ENCODE measurements at regions of chr11 and their contacts with region 1.

Region 1: DNA sequence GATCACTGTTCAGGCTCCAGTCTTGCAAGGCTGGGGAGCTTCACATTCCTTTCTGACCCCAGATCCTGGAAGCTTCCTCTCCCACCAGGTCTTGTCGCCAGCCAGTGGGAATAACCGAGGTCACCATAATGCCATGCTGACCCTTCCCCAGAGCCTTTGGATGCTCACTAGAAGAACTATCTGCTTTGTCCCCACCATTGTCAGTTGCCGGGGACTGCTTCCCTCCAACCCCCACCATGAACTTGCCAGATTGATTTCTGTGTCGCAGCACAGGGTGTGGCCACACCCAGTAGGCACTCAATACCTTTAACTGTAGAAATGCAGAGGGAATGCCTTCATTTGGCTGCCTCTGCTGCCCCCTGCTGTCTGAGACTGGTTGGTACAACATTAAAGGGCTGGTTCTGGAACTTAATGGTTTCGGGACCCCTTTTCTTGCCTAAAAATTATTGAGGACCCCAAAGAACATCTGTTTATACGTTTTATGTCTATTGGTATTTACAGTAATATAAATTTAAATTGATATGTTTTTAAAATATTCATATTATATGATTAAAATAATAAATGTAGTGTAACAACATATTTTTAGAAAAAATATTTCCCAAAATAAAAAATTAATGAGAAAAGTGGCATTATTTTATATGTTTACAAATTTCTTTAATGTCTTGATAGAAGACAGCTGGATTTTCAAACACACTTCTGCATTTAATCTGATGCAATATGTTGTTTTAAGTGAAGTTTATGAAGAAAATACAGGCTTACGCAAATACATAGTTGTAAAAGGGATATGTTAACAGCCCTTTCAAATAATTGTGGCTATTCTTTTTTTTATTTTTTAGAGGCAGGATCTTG is 6.7 kb upstream of the GDPD5 start:
- DNase-seq: peak in 9 of 10 donors; percentile 47 to 95 (median 76)

Region 2: DNA sequence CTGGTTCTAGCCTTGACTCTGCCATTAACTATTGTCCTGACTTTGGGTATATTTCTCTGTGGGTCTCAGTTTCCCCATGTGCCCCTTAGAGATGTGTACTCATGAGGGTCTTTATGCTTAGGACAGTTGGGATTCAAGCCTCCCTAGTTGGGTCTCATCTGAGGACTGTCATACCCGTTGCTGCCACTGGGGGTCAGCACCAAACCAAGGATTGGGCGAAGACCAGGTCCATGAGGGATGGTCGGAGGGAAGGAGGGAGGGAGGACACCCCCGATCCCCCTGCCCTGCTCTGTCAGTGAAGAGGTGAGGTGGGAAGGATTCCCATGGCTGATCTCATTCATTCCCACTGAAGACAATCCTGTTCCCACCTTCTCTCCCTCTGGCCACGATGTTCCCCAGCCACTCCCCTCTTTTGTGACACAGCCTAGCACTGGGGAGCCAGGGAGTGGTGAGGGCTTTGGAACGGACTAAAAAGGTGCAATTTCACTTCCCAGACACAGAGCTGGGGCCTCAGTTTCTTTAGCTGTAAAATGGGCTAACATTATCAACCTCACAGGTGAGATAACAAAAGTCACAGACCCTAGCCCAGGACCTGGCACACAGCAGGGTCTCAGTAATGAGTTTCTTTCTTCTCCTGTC is 87.0 kb before region 1 on chr11:
- intact Hi-C with region 1: loop called (anchors 1 kb)
- DNase-seq: peak; percentile 55 to 95 (median 81)

Region 3: GRCh38 chr11:75919525-75919924 is 387.1 kb after region 1 on chr11:
- intact Hi-C with region 1: no loop called
- DNase-seq: no peak